Prostate gland (tissue), 2 donors: ENCODE measurements at regions of chr1 and their contacts with region 1.

Region 1: GRCh38 chr1:93878889-93879586 is at the start of gene DNTTIP2:
- DNase-seq: peak; percentile 89
- H3K4me3 ChIP-seq: peak within 1 kb of the TSS; percentile 60 to 79
- H3K27ac ChIP-seq: peak within 1 kb of the TSS; percentile 86 to 90
- H3K4me1 ChIP-seq: peaks cover 6% of the 10 kb centered on the region
- H3K27me3 ChIP-seq: no peaks in the 10 kb centered on the region
- CTCF ChIP-seq: no peak
- POLR2A ChIP-seq: peak; percentile 80
- total RNA-seq, gene DNTTIP2: 15.9 to 26.1 TPM

Region 2: DNA sequence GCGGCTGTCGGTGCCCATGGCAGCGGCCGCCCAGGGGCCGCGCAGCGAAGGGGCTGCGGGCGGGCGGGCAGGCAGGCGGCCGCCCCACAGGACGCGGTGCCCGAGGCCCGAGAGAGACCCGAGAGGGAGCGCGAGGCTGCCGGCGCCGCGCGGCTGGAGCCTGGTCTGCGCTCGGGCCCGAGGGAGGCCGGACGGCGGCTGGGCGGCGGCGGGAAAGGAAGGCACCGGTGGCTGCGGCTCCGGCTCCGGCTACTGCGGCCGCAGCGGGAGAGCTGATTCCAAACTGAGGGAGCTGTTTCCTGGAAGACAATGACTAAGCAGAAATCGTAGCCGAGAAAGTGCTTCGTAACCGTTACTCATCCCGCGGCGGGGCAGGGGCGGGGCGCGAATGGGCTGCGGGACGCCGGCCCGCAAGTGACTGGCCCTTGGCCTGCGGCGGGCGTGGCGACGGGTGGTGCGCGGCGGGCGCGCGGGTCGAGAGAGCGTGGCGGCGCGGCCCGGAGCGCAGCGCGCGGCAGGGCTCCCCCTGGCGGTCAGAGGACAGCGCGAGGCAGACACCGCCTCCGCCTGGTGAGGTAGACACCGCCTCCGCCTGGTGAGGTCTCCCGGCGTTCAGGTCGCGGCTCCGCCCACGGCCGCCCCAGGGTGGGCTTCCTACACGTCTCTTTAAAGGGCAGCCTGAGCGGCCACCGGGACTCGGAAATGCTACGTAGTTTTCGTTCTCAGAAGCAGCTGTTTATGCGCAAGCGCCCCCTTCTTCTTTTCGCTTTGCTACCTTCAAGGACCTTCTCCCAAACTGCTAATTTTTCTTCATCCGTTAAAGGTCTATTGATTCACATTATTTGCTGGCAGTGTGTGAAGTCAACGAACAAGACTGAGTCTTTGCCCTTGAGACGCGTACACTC is 30.4 kb after region 1 on chr1 and contains the start of gene GCLM:
- intact Hi-C with region 1: loop called (anchors 2 kb)
- DNase-seq: peak; percentile 82
- H3K4me3 ChIP-seq: peak within 1 kb of the TSS; percentile 85 to 86
- H3K27ac ChIP-seq: peak within 1 kb of the TSS; percentile 79 to 84
- H3K4me1 ChIP-seq: no peaks in the 10 kb centered on the region
- H3K27me3 ChIP-seq: no peaks in the 10 kb centered on the region
- CTCF ChIP-seq: peak; percentile 83 to 97 (median 89)
- POLR2A ChIP-seq: peak; percentile 54
- total RNA-seq, gene GCLM: 6.5 to 14.1 TPM

Region 3: GRCh38 chr1:93919780-93920179 is 40.7 kb after region 1 on chr1:
- intact Hi-C with region 1: no loop called
- DNase-seq: no peak
- H3K4me3 ChIP-seq: no peak overlapping the region
- H3K27ac ChIP-seq: no peak overlapping the region
- H3K4me1 ChIP-seq: no peaks in the 10 kb centered on the region
- H3K27me3 ChIP-seq: no peaks in the 10 kb centered on the region
- CTCF ChIP-seq: no peak
- POLR2A ChIP-seq: no peak